ENCODE measurements at regions of chr16 and their contacts with region 1.

Region 1: DNA sequence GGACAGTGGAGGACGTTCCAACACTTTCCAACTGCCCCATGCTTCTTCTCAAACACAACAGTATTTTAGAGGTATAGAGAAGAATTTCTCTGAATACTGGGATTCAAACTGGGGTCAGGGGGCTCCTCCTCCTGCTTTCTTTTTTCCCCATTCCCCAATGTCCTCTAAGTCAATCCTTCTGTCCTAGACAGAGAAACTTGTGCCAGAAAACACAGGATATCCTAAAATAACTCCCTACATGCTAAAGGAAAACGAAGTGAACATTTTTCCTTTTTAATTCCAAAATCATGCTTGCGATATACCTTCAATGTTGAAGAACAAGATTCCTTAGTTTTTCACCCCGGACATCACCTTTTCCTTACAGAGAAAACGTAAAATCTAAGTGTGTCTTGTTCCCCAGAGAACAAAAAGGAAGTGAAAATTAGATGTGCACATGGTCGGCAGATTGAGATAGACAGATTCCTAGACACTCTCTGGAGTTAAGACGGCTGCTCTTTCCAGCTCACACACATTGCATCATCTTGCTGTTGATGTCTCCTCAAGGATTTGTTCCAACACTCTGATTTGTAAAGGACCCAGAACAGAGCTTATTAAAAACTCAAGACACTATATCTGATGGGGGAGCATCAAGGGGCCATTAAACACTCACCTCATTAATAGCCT is 228.2 kb downstream of the GRIN2A start:
- DNase-seq: no peak
- H3K4me3 Mint-ChIP-seq: no peak overlapping the region
- H3K27ac Mint-ChIP-seq: no peak overlapping the region
- H3K4me1 Mint-ChIP-seq: peaks cover 12% of the 10 kb centered on the region
- H3K27me3 Mint-ChIP-seq: no peaks in the 10 kb centered on the region
- CTCF ChIP-seq: no peak

Region 2: DNA sequence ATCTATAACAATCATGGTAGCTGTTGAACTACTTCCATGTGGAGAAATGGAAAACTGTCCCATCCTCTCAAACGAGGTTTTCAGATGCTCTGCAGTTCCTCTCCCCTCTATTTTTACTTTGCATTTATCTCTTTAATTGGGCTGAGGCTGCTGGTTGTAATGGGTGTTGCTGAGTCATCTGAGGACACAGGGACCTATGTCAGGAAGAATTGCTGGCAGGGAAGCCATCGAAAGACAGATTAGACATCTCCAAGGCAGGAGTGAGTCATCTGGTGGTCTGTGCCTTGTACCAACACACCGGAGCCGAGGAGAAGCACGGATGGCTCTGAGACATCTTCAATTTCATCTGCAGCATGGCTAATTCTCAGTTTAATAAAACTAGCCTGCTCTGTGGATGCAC is 166.3 kb before region 1 on chr16:
- CTCF ChIA-PET with region 1: no interaction called
- intact Hi-C with region 1: no loop called
- DNase-seq: no peak
- H3K4me3 Mint-ChIP-seq: no peak overlapping the region
- H3K27ac Mint-ChIP-seq: peak overlapping the region; percentile 33
- H3K4me1 Mint-ChIP-seq: peaks cover 17% of the 10 kb centered on the region
- H3K27me3 Mint-ChIP-seq: no peaks in the 10 kb centered on the region
- CTCF ChIP-seq: no peak

Region 3: DNA sequence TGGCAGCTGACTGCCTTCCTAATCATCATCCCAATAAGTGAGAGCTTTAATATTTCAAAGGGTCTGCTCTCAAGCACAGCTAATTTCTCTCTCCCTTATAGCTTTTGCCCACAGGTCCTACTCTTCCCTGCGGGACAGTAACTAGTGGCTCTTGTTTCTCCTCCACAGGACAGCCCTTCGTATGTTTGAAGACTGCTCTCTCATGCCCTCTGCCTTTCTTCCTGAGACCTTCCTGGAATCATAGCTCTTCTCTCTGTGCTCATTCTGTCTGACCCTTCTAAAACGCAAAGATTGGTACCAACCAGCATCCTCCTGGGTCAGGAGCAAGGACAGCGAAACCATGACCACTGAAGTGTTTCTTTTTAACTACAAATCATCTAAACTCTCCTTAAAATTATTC is 59.3 kb after region 1 on chr16:
- CTCF ChIA-PET with region 1: no interaction called
- intact Hi-C with region 1: loop called (anchors 1 kb)
- DNase-seq: no peak
- H3K4me3 Mint-ChIP-seq: no peak overlapping the region
- H3K27ac Mint-ChIP-seq: peak overlapping the region; percentile 27
- H3K4me1 Mint-ChIP-seq: peaks cover 31% of the 10 kb centered on the region
- H3K27me3 Mint-ChIP-seq: no peaks in the 10 kb centered on the region
- CTCF ChIP-seq: no peak

Region 4: DNA sequence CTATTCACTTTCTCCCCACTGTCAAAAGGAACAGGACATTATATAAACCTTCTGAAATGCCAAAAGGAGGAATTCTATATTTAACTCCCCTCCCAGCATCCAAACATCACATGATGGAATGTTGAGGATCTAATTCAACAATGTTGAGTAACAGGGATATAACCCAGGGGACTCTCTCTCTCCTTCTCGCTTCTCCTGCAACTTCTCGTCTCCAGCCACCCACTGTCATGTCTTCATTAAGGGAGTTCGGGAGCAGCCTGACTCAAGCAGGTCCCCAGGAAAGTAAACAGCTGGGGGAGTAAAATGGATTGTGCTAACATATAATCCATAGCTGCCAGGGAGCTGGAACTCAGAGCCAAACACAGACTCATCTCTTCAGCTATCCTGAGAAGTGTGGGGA is 176.5 kb after region 1 on chr16:
- CTCF ChIA-PET with region 1: no interaction called
- intact Hi-C with region 1: no loop called
- DNase-seq: no peak
- H3K4me3 Mint-ChIP-seq: no peak overlapping the region
- H3K27ac Mint-ChIP-seq: no peak overlapping the region
- H3K4me1 Mint-ChIP-seq: peaks cover 36% of the 10 kb centered on the region
- H3K27me3 Mint-ChIP-seq: no peaks in the 10 kb centered on the region
- CTCF ChIP-seq: no peak

Measured in Calu3 (cell line).